IMR-90 (cell line): ENCODE measurements at regions of chr5 and their contacts with region 1.

Region 1: DNA sequence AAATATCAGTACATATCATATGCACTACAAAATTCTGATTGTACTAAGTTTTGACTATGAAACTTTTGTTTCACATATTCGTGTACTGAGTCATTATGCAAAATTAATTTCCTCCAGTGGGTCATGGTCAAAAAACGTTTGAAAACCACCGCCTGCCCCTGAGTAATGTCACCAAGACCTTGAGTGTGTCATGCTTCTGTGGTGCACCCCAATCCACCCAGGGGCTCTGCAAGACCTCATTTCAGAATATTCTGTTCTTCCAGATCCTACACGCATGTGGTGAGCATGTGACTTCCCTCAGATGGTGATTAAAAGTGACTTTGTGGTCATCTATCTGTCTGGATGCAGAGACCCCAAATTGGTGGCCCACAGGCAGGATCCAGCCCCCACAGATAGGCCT is 31.0 kb downstream of the ABLIM3 start:
- DNase-seq: peak; percentile 92
- ATAC-seq: peak; percentile 36
- H3K4me3 ChIP-seq: no peak overlapping the region
- H3K27ac ChIP-seq: peak overlapping the region; percentile 34; the same call in 1 of the 2 replicates
- H3K4me1 ChIP-seq: peaks cover 40% of the 10 kb centered on the region
- H3K27me3 ChIP-seq: no peaks in the 10 kb centered on the region
- CTCF ChIP-seq: no peak
- POLR2A ChIP-seq: no peak
- RAD21 ChIP-seq: no peak

Region 2: GRCh38 chr5:149141224-149141956 is 30.9 kb before region 1 on chr5 and contains the start of gene ABLIM3:
- CTCF ChIA-PET with region 1: no interaction called
- POLR2A ChIA-PET with region 1: no interaction called
- dilution Hi-C with region 1: no loop called
- in situ Hi-C with region 1: no loop called
- intact Hi-C with region 1: loop called (anchors 2 kb)
- DNase-seq: peak; percentile 55
- ATAC-seq: peak; percentile 84
- H3K4me3 ChIP-seq: peak within 1 kb of the TSS; percentile 70
- H3K27ac ChIP-seq: peak within 1 kb of the TSS; percentile 67
- H3K4me1 ChIP-seq: peaks cover 11% of the 10 kb centered on the region
- H3K27me3 ChIP-seq: no peaks in the 10 kb centered on the region
- CTCF ChIP-seq: peak; percentile 95
- POLR2A ChIP-seq: peak; percentile 72
- RAD21 ChIP-seq: peak; percentile 81
- total RNA-seq, gene ABLIM3: 33.3 and 34.2 TPM in 2 replicates

Region 3: GRCh38 chr5:149153751-149154610 is 18.3 kb before region 1 on chr5:
- CTCF ChIA-PET with region 1: no interaction called
- POLR2A ChIA-PET with region 1: no interaction called
- dilution Hi-C with region 1: no loop called
- in situ Hi-C with region 1: no loop called
- intact Hi-C with region 1: loop called (anchors 2 kb)
- DNase-seq: peak; percentile 75
- ATAC-seq: peak; percentile 38
- H3K4me3 ChIP-seq: no peak overlapping the region
- H3K27ac ChIP-seq: peak overlapping the region; percentile 38
- H3K4me1 ChIP-seq: peaks cover 39% of the 10 kb centered on the region
- H3K27me3 ChIP-seq: no peaks in the 10 kb centered on the region
- CTCF ChIP-seq: no peak
- POLR2A ChIP-seq: no peak
- RAD21 ChIP-seq: no peak

Region 4: GRCh38 chr5:149195337-149195887 is 23.2 kb after region 1 on chr5:
- CTCF ChIA-PET with region 1: no interaction called
- POLR2A ChIA-PET with region 1: no interaction called
- dilution Hi-C with region 1: no loop called
- in situ Hi-C with region 1: no loop called
- intact Hi-C with region 1: loop called (anchors 2 kb)
- DNase-seq: no peak
- ATAC-seq: no peak
- H3K4me3 ChIP-seq: no peak overlapping the region
- H3K27ac ChIP-seq: no peak overlapping the region
- H3K4me1 ChIP-seq: peaks cover 4% of the 10 kb centered on the region; the same call in 1 of the 2 replicates
- H3K27me3 ChIP-seq: no peaks in the 10 kb centered on the region
- CTCF ChIP-seq: no peak
- POLR2A ChIP-seq: no peak
- RAD21 ChIP-seq: no peak

Region 5: GRCh38 chr5:149205625-149206523 is 33.6 kb after region 1 on chr5:
- CTCF ChIA-PET with region 1: no interaction called
- POLR2A ChIA-PET with region 1: no interaction called
- dilution Hi-C with region 1: no loop called
- in situ Hi-C with region 1: no loop called
- intact Hi-C with region 1: loop called (anchors 5 kb)
- DNase-seq: peak; percentile 93
- ATAC-seq: peak; percentile 76
- H3K4me3 ChIP-seq: no peak overlapping the region
- H3K27ac ChIP-seq: peak overlapping the region; percentile 95
- H3K4me1 ChIP-seq: peaks cover 43% of the 10 kb centered on the region
- H3K27me3 ChIP-seq: no peaks in the 10 kb centered on the region
- CTCF ChIP-seq: no peak
- POLR2A ChIP-seq: no peak
- RAD21 ChIP-seq: no peak; the same call in 1 of the 2 replicates

Region 6: GRCh38 chr5:149551200-149552037 is 379.2 kb after region 1 on chr5 and contains the start of gene CSNK1A1:
- CTCF ChIA-PET with region 1: no interaction called
- POLR2A ChIA-PET with region 1: no interaction called
- dilution Hi-C with region 1: no loop called
- in situ Hi-C with region 1: loop called (anchors 25 kb)
- intact Hi-C with region 1: no loop called
- DNase-seq: peak; percentile 98
- ATAC-seq: peak; percentile 93
- H3K4me3 ChIP-seq: peak within 1 kb of the TSS; percentile 81
- H3K27ac ChIP-seq: peak within 1 kb of the TSS; percentile 100
- H3K4me1 ChIP-seq: no peaks in the 10 kb centered on the region; the same call in 1 of the 2 replicates
- H3K27me3 ChIP-seq: no peaks in the 10 kb centered on the region
- CTCF ChIP-seq: peak; percentile 77
- POLR2A ChIP-seq: peak; percentile 98
- RAD21 ChIP-seq: peak; percentile 77
- total RNA-seq, gene CSNK1A1: 419 and 573 TPM in 2 replicates

Region 7: GRCh38 chr5:150556859-150557498 is 1384.7 kb after region 1 on chr5:
- CTCF ChIA-PET with region 1: no interaction called
- POLR2A ChIA-PET with region 1: no interaction called
- dilution Hi-C with region 1: no loop called
- in situ Hi-C with region 1: no loop called
- intact Hi-C with region 1: no loop called
- DNase-seq: no peak
- ATAC-seq: no peak
- H3K4me3 ChIP-seq: no peak overlapping the region
- H3K27ac ChIP-seq: no peak overlapping the region
- H3K4me1 ChIP-seq: 0 out of 2 replicates have a peak, but pooled peaks cover 8% of the 10 kb centered on the region
- H3K27me3 ChIP-seq: no peaks in the 10 kb centered on the region
- CTCF ChIP-seq: no peak
- POLR2A ChIP-seq: no peak
- RAD21 ChIP-seq: no peak